Body of pancreas (tissue), 4 donors: ENCODE measurements at regions of chr7 and their contacts with region 1.

Region 1: GRCh38 chr7:127644479-127644878 is 7.5 kb upstream of the SND1 start:
- DNase-seq: no peak
- ATAC-seq: no peak
- H3K4me3 ChIP-seq: no peak overlapping the region
- H3K27ac ChIP-seq: no peak overlapping the region
- H3K4me1 ChIP-seq: peaks cover 10% of the 10 kb centered on the region
- H3K27me3 ChIP-seq: no peaks in the 10 kb centered on the region
- CTCF ChIP-seq: no peak
- POLR2A ChIP-seq: no peak

Region 2: GRCh38 chr7:127598318-127598717 is 46.2 kb before region 1 on chr7:
- intact Hi-C with region 1: loop called (anchors 10 kb)
- DNase-seq: no peak
- ATAC-seq: no peak
- H3K4me3 ChIP-seq: no peak overlapping the region
- H3K27ac ChIP-seq: no peak overlapping the region
- H3K4me1 ChIP-seq: peaks cover 18% of the 10 kb centered on the region
- H3K27me3 ChIP-seq: no peaks in the 10 kb centered on the region
- CTCF ChIP-seq: peak in 4 of 7 experiments; percentile 4 to 30 (median 17)
- POLR2A ChIP-seq: no peak